PC-3 (cell line): ENCODE measurements at regions of chr14 and their contacts with region 1.

Region 1: DNA sequence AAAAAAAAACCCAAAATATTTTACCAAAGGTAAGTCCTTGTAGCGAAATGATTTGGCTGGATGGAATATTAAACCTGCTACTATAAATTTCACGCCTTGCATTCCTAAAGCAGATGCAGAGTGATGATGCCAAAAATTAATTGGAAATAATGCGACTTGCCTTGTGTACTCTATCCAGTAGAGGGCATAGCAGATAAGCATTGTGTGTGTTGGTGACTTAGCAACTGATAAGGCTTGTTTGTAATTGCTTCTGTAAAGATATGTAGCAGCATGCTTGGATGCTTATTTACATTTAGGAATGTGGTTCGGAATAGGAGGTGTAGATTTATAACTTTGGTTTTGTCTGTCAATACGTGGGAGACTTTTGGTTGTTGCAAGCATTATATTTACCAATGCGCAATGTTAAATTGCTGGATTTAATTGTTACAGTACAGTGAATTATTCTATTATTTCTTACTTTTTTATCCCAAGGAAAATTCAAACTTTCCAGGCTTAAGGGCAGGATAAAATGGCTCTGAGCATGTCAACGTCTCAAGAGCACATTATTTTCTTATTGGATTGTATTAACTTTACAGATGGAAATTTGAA is 80.5 kb downstream of the TMEM260 start:
- DNase-seq: peak; percentile 82
- ATAC-seq: peak; percentile 83
- H3K4me3 ChIP-seq: no peak overlapping the region
- H3K27ac ChIP-seq: no peak overlapping the region
- H3K4me1 ChIP-seq: no peaks in the 10 kb centered on the region
- H3K27me3 ChIP-seq: peaks cover 41% of the 10 kb centered on the region
- CTCF ChIP-seq: peak; percentile 98

Region 2: DNA sequence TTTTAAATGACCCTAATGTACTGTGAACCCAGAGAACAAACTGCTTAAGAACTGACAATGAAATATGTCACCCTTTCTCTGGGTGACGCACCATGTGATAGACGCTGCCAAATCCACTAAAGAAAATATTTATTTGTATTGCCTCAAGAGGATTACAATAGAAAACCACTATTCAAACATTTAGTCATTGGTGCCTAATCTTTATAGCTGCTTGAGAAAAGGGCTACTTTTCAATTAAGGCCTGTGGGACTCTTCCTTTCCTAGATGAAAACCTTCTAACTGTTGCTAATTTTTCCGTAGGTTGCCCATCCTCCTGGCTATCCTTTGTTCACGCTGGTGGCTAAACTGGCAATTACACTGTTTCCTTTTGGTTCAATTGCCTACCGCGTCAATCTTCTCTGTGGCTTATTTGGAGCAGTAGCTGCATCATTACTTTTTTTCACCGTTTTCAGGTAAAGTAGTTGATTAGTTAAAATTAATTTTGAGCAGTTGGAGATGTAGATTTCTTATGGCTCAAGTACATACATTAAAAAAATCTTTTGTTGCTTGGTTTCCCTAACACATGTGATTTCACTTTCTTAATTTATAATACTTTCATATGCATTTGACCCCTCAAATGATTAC is 74.5 kb before region 1 on chr14:
- CTCF ChIA-PET with region 1: no interaction called
- POLR2A ChIA-PET with region 1: no interaction called
- intact Hi-C with region 1: loop called (anchors 2 kb)
- DNase-seq: peak; percentile 99
- ATAC-seq: peak; percentile 87
- H3K4me3 ChIP-seq: no peak overlapping the region
- H3K27ac ChIP-seq: peak overlapping the region; percentile 75
- H3K4me1 ChIP-seq: peaks cover 52% of the 10 kb centered on the region
- H3K27me3 ChIP-seq: no peaks in the 10 kb centered on the region
- CTCF ChIP-seq: peak; percentile 79

Region 3: GRCh38 chr14:56603648-56604047 is 56.4 kb before region 1 on chr14:
- CTCF ChIA-PET with region 1: no interaction called
- POLR2A ChIA-PET with region 1: no interaction called
- intact Hi-C with region 1: no loop called
- DNase-seq: no peak
- ATAC-seq: no peak
- H3K4me3 ChIP-seq: no peak overlapping the region
- H3K27ac ChIP-seq: no peak overlapping the region
- H3K4me1 ChIP-seq: no peaks in the 10 kb centered on the region
- H3K27me3 ChIP-seq: no peaks in the 10 kb centered on the region
- CTCF ChIP-seq: no peak

Region 4: DNA sequence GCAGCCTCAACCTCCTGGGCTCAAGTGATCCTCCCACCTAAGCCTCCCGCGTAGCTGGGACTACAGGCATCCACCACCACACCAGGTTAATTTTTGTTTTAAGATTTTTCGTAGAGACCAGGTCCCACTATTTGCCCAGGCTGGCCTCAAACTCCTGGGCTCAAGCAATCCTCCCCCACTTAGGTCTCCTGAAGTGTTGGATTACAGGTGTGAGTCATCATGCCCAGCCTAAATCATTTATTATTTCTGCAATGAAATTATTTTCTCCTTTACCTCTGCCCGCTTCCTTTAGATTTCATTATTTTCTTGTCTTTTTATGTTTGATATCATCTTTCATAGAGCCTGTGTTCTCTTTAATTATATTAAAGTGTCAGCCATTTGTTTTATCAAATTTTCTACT is 315.5 kb after region 1 on chr14:
- CTCF ChIA-PET with region 1: interaction called, 15 read pairs
- POLR2A ChIA-PET with region 1: no interaction called
- intact Hi-C with region 1: no loop called
- DNase-seq: peak; percentile 56
- ATAC-seq: peak; percentile 29; the same call in 1 of the 2 replicates
- H3K4me3 ChIP-seq: no peak overlapping the region
- H3K27ac ChIP-seq: no peak overlapping the region
- H3K4me1 ChIP-seq: peaks cover 4% of the 10 kb centered on the region; the same call in 1 of the 2 replicates
- H3K27me3 ChIP-seq: peaks cover 58% of the 10 kb centered on the region
- CTCF ChIP-seq: no peak

Region 5: DNA sequence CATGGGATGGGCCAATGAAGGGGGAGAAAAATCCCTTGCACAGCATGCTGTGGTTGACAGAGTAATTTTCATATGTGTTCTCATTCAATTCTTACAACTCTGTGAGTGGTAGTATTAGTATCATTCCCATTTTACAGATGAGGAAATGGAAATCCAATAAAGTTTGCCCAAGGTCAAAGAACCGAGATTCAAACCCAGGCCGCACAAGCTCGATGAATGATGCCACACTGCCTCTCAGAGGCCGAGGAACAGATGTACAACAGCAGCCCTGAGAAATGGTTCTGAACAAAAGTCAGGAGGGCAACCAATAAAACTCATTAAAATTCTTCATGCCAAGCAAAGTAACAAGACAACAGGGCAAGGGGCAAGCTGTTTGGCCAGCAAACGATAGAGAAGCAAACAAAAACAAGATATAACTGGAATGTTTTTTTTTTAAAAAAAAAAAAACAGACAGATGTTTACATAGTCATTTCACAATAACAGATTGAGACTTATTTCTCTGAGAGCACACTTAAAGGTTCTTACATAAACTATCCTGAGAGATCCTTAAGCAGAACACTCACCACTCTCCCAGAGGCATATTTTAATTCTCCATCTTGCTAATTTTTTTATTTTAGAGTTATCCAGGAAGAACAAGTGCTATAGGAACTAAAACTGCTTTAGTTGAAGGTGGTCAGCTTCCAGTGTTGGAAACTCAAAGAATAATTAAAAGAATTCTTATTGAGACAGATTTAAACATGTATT is 522.9 kb after region 1 on chr14:
- CTCF ChIA-PET with region 1: no interaction called
- POLR2A ChIA-PET with region 1: no interaction called
- intact Hi-C with region 1: loop called (anchors 5 kb)
- DNase-seq: peak; percentile 67
- ATAC-seq: peak; percentile 40; the same call in 1 of the 2 replicates
- H3K4me3 ChIP-seq: no peak overlapping the region
- H3K27ac ChIP-seq: no peak overlapping the region
- H3K4me1 ChIP-seq: no peaks in the 10 kb centered on the region
- H3K27me3 ChIP-seq: peaks cover 90% of the 10 kb centered on the region
- CTCF ChIP-seq: peak; percentile 96

Region 6: GRCh38 chr14:57382283-57382682 is 722.2 kb after region 1 on chr14:
- CTCF ChIA-PET with region 1: no interaction called
- POLR2A ChIA-PET with region 1: no interaction called
- intact Hi-C with region 1: loop called (anchors 2 kb)
- DNase-seq: peak; percentile 99
- ATAC-seq: peak; percentile 99
- H3K4me3 ChIP-seq: no peak overlapping the region
- H3K27ac ChIP-seq: peak overlapping the region; percentile 45
- H3K4me1 ChIP-seq: peaks cover 33% of the 10 kb centered on the region
- H3K27me3 ChIP-seq: no peaks in the 10 kb centered on the region
- CTCF ChIP-seq: no peak